ENCODE measurements at regions of chr12 and their contacts with region 1.

Region 1: DNA sequence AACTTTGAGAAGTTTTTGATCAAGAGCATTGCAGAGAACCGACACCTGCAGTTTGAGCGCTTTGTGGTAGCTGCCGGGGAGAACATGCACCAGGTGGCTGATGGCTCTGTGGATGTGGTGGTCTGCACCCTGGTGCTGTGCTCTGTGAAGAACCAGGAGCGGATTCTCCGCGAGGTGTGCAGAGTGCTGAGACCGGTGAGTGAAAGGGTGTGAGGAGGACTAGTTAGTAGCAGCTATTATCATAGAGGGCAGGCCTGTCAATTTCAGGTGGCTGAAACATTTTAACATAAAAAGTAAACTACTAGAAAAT is 27.0 kb upstream of the HIGD1C start:
- DNase-seq: no peak
- H3K4me3 ChIP-seq: no peak overlapping the region
- H3K4me3 Mint-ChIP-seq: no peak overlapping the region
- H3K27ac Mint-ChIP-seq: no peak overlapping the region
- H3K4me1 ChIP-seq: peaks cover 16% of the 10 kb centered on the region
- H3K4me1 Mint-ChIP-seq: peaks cover 28% of the 10 kb centered on the region
- H3K27me3 ChIP-seq: no peaks in the 10 kb centered on the region
- H3K27me3 Mint-ChIP-seq: no peaks in the 10 kb centered on the region
- CTCF ChIP-seq: no peak

Region 2: GRCh38 chr12:50537538-50537919 is 387.8 kb before region 1 on chr12:
- CTCF ChIA-PET with region 1: no interaction called
- POLR2A ChIA-PET with region 1: no interaction called
- intact Hi-C with region 1: no loop called
- DNase-seq: no peak
- H3K4me3 ChIP-seq: no peak overlapping the region
- H3K4me3 Mint-ChIP-seq: no peak overlapping the region
- H3K27ac Mint-ChIP-seq: peak overlapping the region; percentile 63
- H3K4me1 ChIP-seq: peaks cover 38% of the 10 kb centered on the region
- H3K4me1 Mint-ChIP-seq: peaks cover 23% of the 10 kb centered on the region
- H3K27me3 ChIP-seq: no peaks in the 10 kb centered on the region
- H3K27me3 Mint-ChIP-seq: no peaks in the 10 kb centered on the region
- CTCF ChIP-seq: no peak

Region 3: GRCh38 chr12:51005740-51006139 is 80.4 kb after region 1 on chr12:
- CTCF ChIA-PET with region 1: no interaction called
- POLR2A ChIA-PET with region 1: interaction called, 16 read pairs
- intact Hi-C with region 1: no loop called
- DNase-seq: peak; percentile 81 to 87
- H3K4me3 ChIP-seq: no peak overlapping the region
- H3K4me3 Mint-ChIP-seq: peak overlapping the region; percentile 64
- H3K27ac Mint-ChIP-seq: peak overlapping the region; percentile 96
- H3K4me1 ChIP-seq: peaks cover 26% of the 10 kb centered on the region
- H3K4me1 Mint-ChIP-seq: peaks cover 23% of the 10 kb centered on the region
- H3K27me3 ChIP-seq: no peaks in the 10 kb centered on the region
- H3K27me3 Mint-ChIP-seq: no peaks in the 10 kb centered on the region
- CTCF ChIP-seq: no peak

Region 4: GRCh38 chr12:51172515-51173431 is 247.5 kb after region 1 on chr12 and contains the start of gene TFCP2:
- CTCF ChIA-PET with region 1: no interaction called
- POLR2A ChIA-PET with region 1: no interaction called
- intact Hi-C with region 1: no loop called
- DNase-seq: peak; percentile 98 to 99
- H3K4me3 ChIP-seq: peak within 1 kb of the TSS; percentile 58
- H3K4me3 Mint-ChIP-seq: no peak within 1 kb of the TSS
- H3K27ac Mint-ChIP-seq: no peak within 1 kb of the TSS
- H3K4me1 ChIP-seq: peaks cover 6% of the 10 kb centered on the region; the same call in 1 of the 2 replicates
- H3K4me1 Mint-ChIP-seq: no peaks in the 10 kb centered on the region
- H3K27me3 ChIP-seq: no peaks in the 10 kb centered on the region
- H3K27me3 Mint-ChIP-seq: no peaks in the 10 kb centered on the region
- CTCF ChIP-seq: peak in 1 of 2 experiments; percentile 25
- total RNA-seq, gene TFCP2: 51.4 and 52.6 TPM in 2 replicates